ENCODE measurements at regions of chr5 and their contacts with region 1.

Region 1: DNA sequence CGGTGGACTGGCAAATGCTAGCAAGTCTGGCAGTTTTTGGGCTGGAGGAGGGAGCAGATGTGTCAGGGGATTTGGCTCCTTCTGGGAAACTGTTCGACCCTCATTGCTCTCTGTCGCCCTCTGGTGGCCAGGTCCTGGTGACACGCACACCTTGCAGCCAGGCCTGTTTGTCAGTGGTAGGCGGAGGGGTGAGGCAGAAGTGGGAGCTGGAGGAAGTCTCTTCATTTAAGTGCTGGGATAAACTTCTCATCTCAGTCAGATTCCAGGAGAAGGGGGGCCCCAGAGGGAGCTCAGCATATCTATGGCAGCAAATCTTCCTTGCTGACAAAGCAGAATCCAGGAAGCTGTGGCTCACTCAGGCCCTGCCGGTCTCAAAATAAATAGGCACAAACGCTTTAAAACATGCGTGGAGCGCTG is 326.5 kb downstream of the ZSWIM6 start:
- DNase-seq: peak; percentile 30 to 81 (median 78)
- H3K4me3 ChIP-seq: peak overlapping the region in 23 of 59 donors; percentile 2 to 54 (median 32)
- H3K27ac ChIP-seq: peak overlapping the region in 55 of 59 donors; percentile 23 to 88 (median 72)
- H3K27me3 ChIP-seq: no peaks in the 10 kb centered on the region
- CTCF ChIP-seq: peak; percentile 79 to 98 (median 92)

Region 2: GRCh38 chr5:60586307-60586901 is 1072.2 kb before region 1 on chr5:
- intact Hi-C with region 1: no loop called
- DNase-seq: no peak
- H3K4me3 ChIP-seq: no peak overlapping the region
- H3K27ac ChIP-seq: no peak overlapping the region
- H3K27me3 ChIP-seq: no peaks in the 10 kb centered on the region
- CTCF ChIP-seq: peak in 55 of 56 donors; percentile 27 to 84 (median 64)

Region 3: DNA sequence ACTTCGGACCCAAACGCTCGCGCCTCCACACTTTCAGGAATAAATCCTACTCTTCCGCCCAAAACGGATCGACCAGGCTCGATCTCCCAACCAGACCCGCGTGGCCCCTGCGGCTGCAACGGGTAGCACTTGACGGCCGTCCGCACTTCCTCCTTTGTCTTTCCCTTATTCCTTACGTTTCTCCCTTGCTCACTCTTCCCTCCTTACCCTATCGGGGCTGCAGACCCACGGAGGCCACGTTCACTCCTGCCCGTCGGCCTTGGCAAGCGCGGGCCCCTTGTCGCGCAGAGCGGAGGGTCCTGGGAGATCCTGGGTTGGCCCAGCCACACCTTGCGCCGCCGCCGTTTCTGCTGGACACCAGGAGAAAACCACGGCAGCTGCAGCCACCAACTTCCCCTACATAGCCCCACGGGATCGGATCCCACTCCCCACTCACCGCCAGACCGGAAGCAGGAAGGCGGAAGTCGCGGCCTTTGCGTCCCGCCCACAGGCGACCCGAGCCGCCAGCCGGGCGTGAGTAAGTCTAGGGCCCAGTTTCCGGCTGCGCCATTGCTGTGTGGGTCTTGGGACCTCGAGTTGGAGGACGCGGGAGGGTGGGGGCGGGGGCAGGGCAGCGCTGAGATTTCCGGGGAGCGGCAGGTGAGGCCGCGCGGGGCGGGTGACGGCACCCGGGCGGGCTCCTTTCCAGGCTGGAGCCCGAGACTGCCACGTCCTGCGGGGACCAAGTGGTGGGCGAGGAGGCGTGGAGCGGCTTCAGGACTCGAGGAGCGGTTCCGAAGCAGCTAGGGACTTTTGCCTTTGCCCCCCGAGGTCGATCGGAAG is 496.4 kb before region 1 on chr5 and contains the start of gene SMIM15:
- intact Hi-C with region 1: loop called in 1 of 2 experiments (anchors 10 kb)
- DNase-seq: peak; percentile 71 to 89 (median 84)
- H3K4me3 ChIP-seq: peak within 1 kb of the TSS; percentile 62 to 99 (median 90)
- H3K27ac ChIP-seq: peak within 1 kb of the TSS; percentile 17 to 94 (median 85)
- H3K27me3 ChIP-seq: no peaks in the 10 kb centered on the region
- CTCF ChIP-seq: peak in 9 of 56 donors; percentile 5 to 30 (median 11)
- total RNA-seq, gene SMIM15: 15.6 to 39.1 (median 29.7) TPM

Region 4: DNA sequence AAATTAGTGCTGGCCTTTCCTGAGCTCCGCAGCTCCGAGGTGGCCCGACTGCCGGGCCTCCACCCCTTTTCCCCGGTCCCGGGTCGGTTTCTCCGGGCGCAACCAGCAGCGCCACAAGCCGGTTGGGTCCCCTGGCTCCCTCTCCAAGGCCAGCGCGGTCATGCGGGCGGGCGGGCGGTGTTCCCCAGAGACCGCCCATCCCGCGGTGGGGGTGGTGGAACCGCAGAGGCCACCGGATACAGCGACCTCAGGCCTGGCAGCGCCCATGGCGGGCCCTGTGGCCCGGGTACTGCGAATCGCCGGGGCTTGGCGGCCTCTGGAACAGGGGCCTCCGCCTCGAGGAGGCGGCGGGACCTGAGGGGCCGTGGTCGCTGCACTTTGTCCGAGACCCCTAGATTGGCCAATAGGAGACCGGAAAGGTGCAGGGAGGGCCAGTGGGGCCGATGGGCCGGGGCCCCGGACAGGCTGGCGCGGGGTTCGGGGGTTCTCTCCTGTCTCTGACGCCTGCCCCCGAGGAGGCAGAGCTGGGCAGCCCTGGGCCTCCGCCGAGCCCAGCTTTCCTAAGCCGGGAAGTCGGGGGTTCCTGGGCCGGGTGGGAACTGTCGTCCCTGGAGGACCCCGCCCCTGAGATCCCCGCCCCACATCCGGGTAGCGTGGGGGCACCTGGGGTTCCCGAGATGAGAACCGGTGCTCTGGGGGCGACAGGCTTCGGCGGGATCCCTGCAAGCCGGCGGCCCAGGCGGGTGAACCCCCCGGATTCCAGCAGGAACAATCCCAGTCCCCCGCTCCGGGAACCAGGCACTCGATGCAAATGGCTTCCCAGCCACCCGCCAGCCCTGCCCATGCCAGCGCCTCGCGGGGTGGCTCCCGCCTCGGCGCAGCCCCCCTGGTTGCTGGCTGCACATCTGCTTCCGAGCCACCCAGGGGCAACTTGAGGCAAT is 32.6 kb before region 1 on chr5:
- intact Hi-C with region 1: loop called in 1 of 2 experiments (anchors 5 kb)
- DNase-seq: peak; percentile 60 to 90 (median 84)
- H3K4me3 ChIP-seq: peak overlapping the region; percentile 40 to 74 (median 59)
- H3K27ac ChIP-seq: peak overlapping the region; percentile 77 to 99 (median 96)
- H3K27me3 ChIP-seq: no peaks in the 10 kb centered on the region
- CTCF ChIP-seq: peak in 27 of 56 donors; percentile 8 to 52 (median 29)

Region 5: GRCh38 chr5:61638476-61638875 is 20.1 kb before region 1 on chr5:
- intact Hi-C with region 1: loop called in 1 of 2 experiments (anchors 2 kb)
- DNase-seq: peak in 8 of 10 donors; percentile 39 to 70 (median 67)
- H3K4me3 ChIP-seq: peak overlapping the region in 51 of 59 donors; percentile 2 to 64 (median 33)
- H3K27ac ChIP-seq: peak overlapping the region; percentile 24 to 99 (median 91)
- H3K27me3 ChIP-seq: no peaks in the 10 kb centered on the region
- CTCF ChIP-seq: peak in 8 of 56 donors; percentile 7 to 52 (median 16)

Measured in dorsolateral prefrontal cortex (tissue), 120 donors.